ENCODE measurements at regions of chr9 and their contacts with region 1.

Region 1: GRCh38 chr9:76810377-76810957 is 46.2 kb downstream of the PCA3 start:
- DNase-seq: peak in 1 of 2 experiments; percentile 62
- H3K4me3 ChIP-seq: no peak overlapping the region
- H3K27ac ChIP-seq: no peak overlapping the region
- H3K4me1 ChIP-seq: no peaks in the 10 kb centered on the region
- H3K27me3 ChIP-seq: no peaks in the 10 kb centered on the region
- CTCF ChIP-seq: peak in 2 of 3 experiments; percentile 90 to 93; a peak in 3 of 4 replicates
- EP300 ChIP-seq: no peak
- POLR2A ChIP-seq: no peak
- RAD21 ChIP-seq: peak; percentile 98 to 100

Region 2: GRCh38 chr9:76289042-76289441 is 521.4 kb before region 1 on chr9:
- CTCF ChIA-PET with region 1: no interaction called
- POLR2A ChIA-PET with region 1: no interaction called
- DNase-seq: no peak
- H3K4me3 ChIP-seq: no peak overlapping the region
- H3K27ac ChIP-seq: no peak overlapping the region
- H3K4me1 ChIP-seq: no peaks in the 10 kb centered on the region
- H3K27me3 ChIP-seq: no peaks in the 10 kb centered on the region
- CTCF ChIP-seq: no peak
- EP300 ChIP-seq: no peak
- POLR2A ChIP-seq: no peak
- RAD21 ChIP-seq: no peak

Region 3: GRCh38 chr9:76756268-76756640 is 54.2 kb before region 1 on chr9:
- CTCF ChIA-PET with region 1: interaction called, 35 read pairs
- POLR2A ChIA-PET with region 1: no interaction called
- DNase-seq: peak; percentile 25 to 60
- H3K4me3 ChIP-seq: no peak overlapping the region
- H3K27ac ChIP-seq: no peak overlapping the region
- H3K4me1 ChIP-seq: peaks cover 0 to 5% (median 2%) of the 10 kb centered on the region in 4 experiments; a peak in 4 of 7 replicates
- H3K27me3 ChIP-seq: no peaks in the 10 kb centered on the region
- CTCF ChIP-seq: peak; percentile 51 to 63 (median 56)
- EP300 ChIP-seq: no peak
- POLR2A ChIP-seq: no peak
- RAD21 ChIP-seq: peak; percentile 72 to 80

Region 4: DNA sequence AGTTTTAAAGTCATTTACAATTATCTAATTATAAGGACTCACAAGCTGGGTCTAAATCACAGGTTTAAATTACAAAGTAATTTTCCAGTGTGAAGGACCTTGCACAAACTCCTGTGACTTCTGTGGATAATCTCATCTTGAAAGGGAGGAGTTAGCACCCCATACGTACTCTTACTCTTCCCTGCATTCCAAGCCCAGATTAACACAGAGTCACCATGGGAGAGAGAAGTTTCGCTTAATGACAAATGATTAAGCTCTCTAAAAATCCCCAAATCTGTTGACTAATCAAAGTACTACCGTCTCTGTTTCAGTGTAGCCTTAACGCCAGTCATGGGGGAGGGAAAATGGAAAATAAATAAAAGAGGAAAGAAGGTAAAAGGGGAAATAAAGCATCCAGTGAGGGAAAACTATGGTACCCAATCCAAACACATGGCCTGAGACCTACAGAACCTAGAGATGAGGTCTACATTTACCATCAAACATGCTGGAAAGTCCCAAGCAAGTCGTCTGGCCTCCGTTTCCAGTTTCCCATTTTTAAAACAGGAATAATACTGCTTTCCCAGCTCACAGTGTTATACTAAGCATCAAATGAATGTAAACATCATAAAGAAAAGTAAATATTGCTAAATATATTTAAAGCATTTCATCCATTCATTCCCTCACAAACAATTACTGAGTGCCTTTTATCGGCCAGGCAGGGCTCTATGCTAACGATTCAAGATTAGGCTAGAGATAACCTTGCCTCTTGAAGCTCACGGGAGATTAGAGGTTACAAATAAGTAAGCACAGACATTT is 17.0 kb after region 1 on chr9:
- CTCF ChIA-PET with region 1: interaction called, 17 read pairs
- POLR2A ChIA-PET with region 1: no interaction called
- DNase-seq: no peak
- H3K4me3 ChIP-seq: no peak overlapping the region
- H3K27ac ChIP-seq: no peak overlapping the region
- H3K4me1 ChIP-seq: peaks cover 0 to 4% (median 0%) of the 10 kb centered on the region in 4 experiments; a peak in 1 of 7 replicates
- H3K27me3 ChIP-seq: no peaks in the 10 kb centered on the region
- CTCF ChIP-seq: no peak
- EP300 ChIP-seq: no peak
- POLR2A ChIP-seq: no peak
- RAD21 ChIP-seq: no peak

Region 5: GRCh38 chr9:76980576-76980975 is 170.1 kb after region 1 on chr9:
- CTCF ChIA-PET with region 1: interaction called, 83 read pairs
- POLR2A ChIA-PET with region 1: no interaction called
- DNase-seq: no peak
- H3K4me3 ChIP-seq: no peak overlapping the region
- H3K27ac ChIP-seq: no peak overlapping the region
- H3K4me1 ChIP-seq: no peaks in the 10 kb centered on the region
- H3K27me3 ChIP-seq: no peaks in the 10 kb centered on the region
- CTCF ChIP-seq: no peak
- EP300 ChIP-seq: no peak
- POLR2A ChIP-seq: no peak
- RAD21 ChIP-seq: no peak

Region 6: GRCh38 chr9:76987594-76988200 is 177.2 kb after region 1 on chr9:
- CTCF ChIA-PET with region 1: interaction called, 217 read pairs
- POLR2A ChIA-PET with region 1: no interaction called
- DNase-seq: peak; percentile 38 to 59
- H3K4me3 ChIP-seq: no peak overlapping the region
- H3K27ac ChIP-seq: no peak overlapping the region
- H3K4me1 ChIP-seq: no peaks in the 10 kb centered on the region
- H3K27me3 ChIP-seq: no peaks in the 10 kb centered on the region
- CTCF ChIP-seq: peak in 2 of 3 experiments; percentile 83 to 87; a peak in 3 of 4 replicates
- EP300 ChIP-seq: no peak
- POLR2A ChIP-seq: no peak
- RAD21 ChIP-seq: peak; percentile 95 to 98

Region 7: DNA sequence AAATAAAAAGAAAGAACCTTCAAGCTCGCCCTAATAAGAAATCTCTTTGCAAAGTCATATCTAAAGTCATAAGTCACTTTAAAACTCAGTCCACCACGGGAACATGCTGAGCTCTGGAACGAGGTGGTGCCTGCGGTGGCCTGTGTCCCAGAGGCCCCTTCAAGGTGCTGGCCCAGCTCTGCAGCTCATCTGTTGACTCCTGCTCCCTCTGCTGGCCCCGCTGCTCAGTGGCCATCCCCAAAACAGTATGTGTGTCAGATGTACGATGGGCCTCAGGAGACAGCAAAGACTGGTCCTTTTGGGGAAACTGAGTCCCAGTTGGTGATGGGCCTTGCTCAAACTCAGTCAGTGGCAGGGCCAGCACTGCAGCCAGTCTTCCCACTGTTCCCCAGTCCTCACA is 186.2 kb after region 1 on chr9:
- CTCF ChIA-PET with region 1: interaction called, 217 read pairs
- POLR2A ChIA-PET with region 1: no interaction called
- DNase-seq: peak in 1 of 2 experiments; percentile 68
- H3K4me3 ChIP-seq: no peak overlapping the region
- H3K27ac ChIP-seq: no peak overlapping the region
- H3K4me1 ChIP-seq: peaks cover 0 to 5% (median 0%) of the 10 kb centered on the region in 4 experiments; a peak in 1 of 7 replicates
- H3K27me3 ChIP-seq: no peaks in the 10 kb centered on the region
- CTCF ChIP-seq: peak; percentile 86 to 94 (median 94)
- EP300 ChIP-seq: no peak
- POLR2A ChIP-seq: no peak
- RAD21 ChIP-seq: peak; percentile 89 to 90

Region 8: GRCh38 chr9:77011973-77012821 is 201.7 kb after region 1 on chr9:
- CTCF ChIA-PET with region 1: interaction called, 13 read pairs
- POLR2A ChIA-PET with region 1: no interaction called
- DNase-seq: peak in 1 of 2 experiments; percentile 98
- H3K4me3 ChIP-seq: peak overlapping the region; percentile 20 to 60 (median 42); a peak in 5 of 8 replicates
- H3K27ac ChIP-seq: no peak overlapping the region
- H3K4me1 ChIP-seq: peaks cover 9 to 30% (median 25%) of the 10 kb centered on the region in 4 experiments
- H3K27me3 ChIP-seq: peaks cover 46 to 71% (median 64%) of the 10 kb centered on the region in 4 experiments
- CTCF ChIP-seq: peak; percentile 89 to 91 (median 91)
- EP300 ChIP-seq: no peak
- POLR2A ChIP-seq: no peak
- RAD21 ChIP-seq: peak; percentile 69 to 79

Measured in H1 (cell line).